CD4-positive, alpha-beta T cell (primary cell): ENCODE measurements at regions of chr20 and their contacts with region 1.

Region 1: DNA sequence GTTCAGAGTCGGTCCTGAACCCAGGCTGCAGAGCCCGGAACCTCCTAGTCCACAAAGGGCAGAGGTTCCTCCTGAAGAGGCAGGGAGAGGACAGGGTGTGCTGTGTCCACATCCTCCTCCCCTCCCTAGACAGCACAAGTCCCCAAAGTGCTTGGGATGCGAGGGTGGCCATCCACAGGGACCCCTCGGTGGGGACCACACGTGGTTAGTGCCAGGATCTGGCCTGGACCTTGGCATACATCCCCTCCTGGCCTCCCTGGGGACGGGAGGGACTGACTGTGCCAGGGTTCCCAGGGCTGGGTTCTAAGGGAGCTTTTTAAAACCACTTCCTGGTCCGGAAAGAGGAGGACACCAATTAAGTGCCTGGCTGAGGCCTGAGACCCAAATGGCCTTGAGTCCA is 63.2 kb downstream of the CTCFL start:
- DNase-seq: no peak
- ATAC-seq: no peak
- H3K4me3 ChIP-seq: no peak overlapping the region
- H3K4me3 Mint-ChIP-seq: no peak overlapping the region
- H3K27ac ChIP-seq: no peak overlapping the region
- H3K27ac Mint-ChIP-seq: no peak overlapping the region
- H3K4me1 ChIP-seq: no peaks in the 10 kb centered on the region
- H3K4me1 Mint-ChIP-seq: peaks cover 12% of the 10 kb centered on the region
- H3K27me3 ChIP-seq: no peaks in the 10 kb centered on the region
- H3K27me3 Mint-ChIP-seq: no peaks in the 10 kb centered on the region
- CTCF ChIP-seq: no peak

Region 2: DNA sequence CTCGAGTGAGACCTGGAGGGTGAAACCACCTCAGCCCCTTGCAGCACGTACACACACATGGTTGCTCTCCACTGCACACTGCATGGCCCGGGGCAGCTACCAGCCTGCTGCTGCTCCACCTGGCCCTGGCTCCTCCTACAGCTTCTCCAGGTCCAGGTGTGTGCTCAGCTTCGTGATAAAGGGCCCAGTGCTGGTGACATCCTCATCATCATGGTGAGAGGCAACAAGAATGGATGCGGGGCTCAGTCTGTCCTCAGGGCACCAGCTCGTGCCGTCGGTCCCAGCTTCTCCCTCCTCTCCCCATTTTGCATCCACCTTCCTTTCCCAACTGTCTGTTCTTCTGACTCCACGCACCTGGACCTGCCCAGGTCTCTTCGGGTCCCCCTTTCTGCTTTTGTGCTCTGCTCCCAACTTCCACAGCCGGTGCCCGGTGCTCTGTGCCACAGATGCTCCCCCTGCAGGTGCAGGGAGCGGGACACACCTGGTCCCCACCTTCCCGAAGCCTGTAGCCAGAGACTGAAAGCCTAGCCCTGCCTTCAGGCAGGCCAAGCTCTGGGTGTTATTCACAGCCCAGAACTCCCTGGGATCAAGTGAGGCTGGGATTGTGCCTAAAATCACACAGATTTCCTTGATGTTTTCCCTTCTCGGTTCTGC is 170.8 kb before region 1 on chr20:
- CTCF ChIA-PET with region 1: no interaction called
- POLR2A ChIA-PET with region 1: no interaction called
- intact Hi-C with region 1: no loop called
- DNase-seq: no peak
- ATAC-seq: no peak
- H3K4me3 ChIP-seq: no peak overlapping the region
- H3K4me3 Mint-ChIP-seq: no peak overlapping the region
- H3K27ac ChIP-seq: no peak overlapping the region
- H3K27ac Mint-ChIP-seq: no peak overlapping the region
- H3K4me1 ChIP-seq: no peaks in the 10 kb centered on the region
- H3K4me1 Mint-ChIP-seq: no peaks in the 10 kb centered on the region
- H3K27me3 ChIP-seq: peaks cover 22 to 41% of the 10 kb centered on the region in 2 experiments
- H3K27me3 Mint-ChIP-seq: peaks cover 74% of the 10 kb centered on the region
- CTCF ChIP-seq: no peak

Region 3: DNA sequence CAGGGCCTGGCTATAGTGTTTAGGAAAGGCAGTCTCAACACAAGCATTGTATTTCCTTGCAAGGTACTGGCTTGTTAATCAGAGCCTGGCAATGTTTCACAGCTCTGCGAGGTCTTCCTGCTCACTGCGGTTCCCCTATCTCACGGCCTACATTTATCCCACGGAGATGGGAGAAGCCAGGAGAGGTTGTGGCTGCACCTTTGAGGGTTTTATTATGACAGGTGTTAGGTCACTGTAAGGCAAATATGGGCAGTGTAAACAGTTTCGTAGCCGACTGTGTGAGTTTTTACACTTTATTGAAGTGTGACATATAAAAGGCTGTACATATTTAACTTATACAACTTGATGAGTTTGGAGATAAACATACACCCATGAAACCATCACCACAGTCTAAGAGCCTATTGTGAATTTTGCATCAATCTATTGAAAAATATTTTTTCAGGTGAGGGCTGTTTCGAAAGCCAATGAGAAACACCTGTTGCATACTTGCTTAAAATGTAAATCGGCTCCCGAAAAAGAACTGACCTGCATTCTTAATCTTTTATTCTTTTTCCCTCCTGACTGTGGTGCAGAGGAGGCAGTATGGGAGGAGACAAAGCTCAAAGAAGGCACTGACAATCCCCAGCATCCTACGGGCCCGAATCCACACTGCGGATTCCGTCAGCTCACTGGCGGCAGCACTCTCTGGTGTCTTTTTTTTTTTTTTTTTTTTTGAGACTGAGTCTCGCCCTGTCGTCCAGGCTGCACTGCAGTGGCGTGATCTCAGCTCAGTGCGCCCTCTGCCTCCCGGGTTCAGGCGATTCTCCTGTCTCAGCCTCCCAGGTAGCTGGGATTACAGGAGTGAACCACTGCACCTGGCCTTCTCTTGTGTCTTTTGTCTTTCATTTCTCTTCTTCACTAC is 78.0 kb before region 1 on chr20:
- CTCF ChIA-PET with region 1: no interaction called
- POLR2A ChIA-PET with region 1: no interaction called
- intact Hi-C with region 1: no loop called
- DNase-seq: peak in 1 of 14 experiments; percentile 30
- ATAC-seq: no peak
- H3K4me3 ChIP-seq: no peak overlapping the region
- H3K4me3 Mint-ChIP-seq: no peak overlapping the region
- H3K27ac ChIP-seq: no peak overlapping the region
- H3K27ac Mint-ChIP-seq: no peak overlapping the region
- H3K4me1 ChIP-seq: peaks cover 16% of the 10 kb centered on the region
- H3K4me1 Mint-ChIP-seq: peaks cover 23% of the 10 kb centered on the region
- H3K27me3 ChIP-seq: no peaks in the 10 kb centered on the region
- H3K27me3 Mint-ChIP-seq: no peaks in the 10 kb centered on the region
- CTCF ChIP-seq: no peak

Region 4: DNA sequence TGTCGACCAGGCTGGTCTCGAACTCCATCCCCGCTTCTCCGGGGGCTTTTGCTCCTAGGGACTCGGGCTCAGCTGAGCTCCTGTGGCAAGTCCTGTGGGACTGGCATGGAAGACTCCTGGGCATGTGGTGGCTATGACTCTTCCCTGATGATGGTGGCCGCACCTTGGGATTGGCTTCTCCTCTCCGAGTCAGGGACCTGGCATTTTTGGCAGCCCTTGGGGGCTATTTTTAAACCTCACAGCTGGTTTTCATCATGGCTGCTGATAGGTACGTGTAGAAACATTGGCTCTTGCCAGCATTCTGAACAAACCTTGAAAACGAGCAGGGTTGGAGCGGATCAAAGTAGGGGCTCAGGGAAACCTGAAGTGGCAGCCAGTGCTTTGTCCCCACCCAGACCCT is 16.4 kb before region 1 on chr20:
- CTCF ChIA-PET with region 1: no interaction called
- POLR2A ChIA-PET with region 1: no interaction called
- intact Hi-C with region 1: loop called in 1 of 2 experiments (anchors 2 kb)
- DNase-seq: no peak
- ATAC-seq: no peak
- H3K4me3 ChIP-seq: no peak overlapping the region
- H3K4me3 Mint-ChIP-seq: no peak overlapping the region
- H3K27ac ChIP-seq: no peak overlapping the region
- H3K27ac Mint-ChIP-seq: no peak overlapping the region
- H3K4me1 ChIP-seq: peaks cover 14% of the 10 kb centered on the region
- H3K4me1 Mint-ChIP-seq: peaks cover 16% of the 10 kb centered on the region
- H3K27me3 ChIP-seq: no peaks in the 10 kb centered on the region
- H3K27me3 Mint-ChIP-seq: no peaks in the 10 kb centered on the region
- CTCF ChIP-seq: no peak

Region 5: GRCh38 chr20:58921564-58921963 is 1459.8 kb after region 1 on chr20:
- CTCF ChIA-PET with region 1: no interaction called
- POLR2A ChIA-PET with region 1: no interaction called
- intact Hi-C with region 1: no loop called
- DNase-seq: no peak
- ATAC-seq: no peak
- H3K4me3 ChIP-seq: no peak overlapping the region
- H3K4me3 Mint-ChIP-seq: no peak overlapping the region
- H3K27ac ChIP-seq: no peak overlapping the region
- H3K27ac Mint-ChIP-seq: no peak overlapping the region
- H3K4me1 ChIP-seq: no peaks in the 10 kb centered on the region
- H3K4me1 Mint-ChIP-seq: no peaks in the 10 kb centered on the region
- H3K27me3 ChIP-seq: no peaks in the 10 kb centered on the region
- H3K27me3 Mint-ChIP-seq: no peaks in the 10 kb centered on the region
- CTCF ChIP-seq: no peak